ENCODE measurements at regions of chr11 and their contacts with region 1.

Region 1: DNA sequence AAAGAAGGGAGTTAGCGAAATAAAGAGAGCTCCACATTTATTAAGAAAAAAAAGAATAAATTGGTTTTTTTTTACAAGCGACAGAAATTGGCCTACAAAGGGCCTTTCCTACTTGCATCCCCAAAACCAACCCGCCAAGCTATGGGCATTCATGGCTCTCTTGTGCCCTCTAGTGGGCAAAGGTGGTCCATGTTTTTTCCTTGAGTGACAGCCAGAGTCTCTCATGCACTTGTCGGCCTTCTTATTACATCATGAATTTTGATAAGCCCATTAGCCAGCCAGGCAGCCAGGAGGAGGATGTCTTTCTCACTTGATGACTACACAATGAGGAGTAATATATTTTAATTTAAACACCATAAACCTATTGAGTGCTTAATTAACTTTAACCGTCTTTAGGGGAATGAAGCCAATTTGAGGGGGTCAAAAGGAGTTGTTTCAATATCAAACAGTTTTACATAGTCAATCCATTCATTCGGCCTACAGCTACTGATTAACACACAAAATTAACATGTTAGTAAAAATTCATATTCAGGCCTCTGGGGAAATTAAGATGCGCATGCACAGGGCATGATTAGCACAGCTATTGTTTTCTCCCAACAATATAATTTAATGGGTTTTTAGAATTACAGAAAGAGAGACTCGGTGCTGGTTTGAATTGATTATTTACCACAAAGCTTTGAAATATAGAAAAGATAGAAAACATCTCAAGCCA is 85.5 kb downstream of the RCN1 start:
- DNase-seq: peak; percentile 79

Region 2: DNA sequence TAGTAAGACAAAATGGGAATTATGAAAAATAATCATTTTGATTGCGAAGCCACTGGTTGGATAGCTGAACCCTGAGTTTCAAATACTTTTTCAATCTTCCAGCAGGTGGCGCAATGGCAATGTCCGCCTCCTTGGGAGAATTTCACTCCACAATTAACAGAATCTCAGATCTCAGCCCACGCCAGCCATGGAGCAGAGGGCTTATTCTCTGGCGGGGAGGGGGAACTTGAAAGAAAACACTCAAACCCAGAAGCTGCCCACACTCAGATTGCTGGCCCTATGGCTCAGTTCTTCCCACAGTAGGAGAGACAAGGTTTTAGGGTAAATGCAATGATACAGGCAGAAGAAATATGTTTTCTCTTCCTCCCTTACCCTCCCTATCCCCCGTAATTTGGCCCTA is 124.2 kb before region 1 on chr11:
- CTCF ChIA-PET with region 1: interaction called, 25 read pairs
- POLR2A ChIA-PET with region 1: no interaction called
- DNase-seq: peak; percentile 73

Region 3: DNA sequence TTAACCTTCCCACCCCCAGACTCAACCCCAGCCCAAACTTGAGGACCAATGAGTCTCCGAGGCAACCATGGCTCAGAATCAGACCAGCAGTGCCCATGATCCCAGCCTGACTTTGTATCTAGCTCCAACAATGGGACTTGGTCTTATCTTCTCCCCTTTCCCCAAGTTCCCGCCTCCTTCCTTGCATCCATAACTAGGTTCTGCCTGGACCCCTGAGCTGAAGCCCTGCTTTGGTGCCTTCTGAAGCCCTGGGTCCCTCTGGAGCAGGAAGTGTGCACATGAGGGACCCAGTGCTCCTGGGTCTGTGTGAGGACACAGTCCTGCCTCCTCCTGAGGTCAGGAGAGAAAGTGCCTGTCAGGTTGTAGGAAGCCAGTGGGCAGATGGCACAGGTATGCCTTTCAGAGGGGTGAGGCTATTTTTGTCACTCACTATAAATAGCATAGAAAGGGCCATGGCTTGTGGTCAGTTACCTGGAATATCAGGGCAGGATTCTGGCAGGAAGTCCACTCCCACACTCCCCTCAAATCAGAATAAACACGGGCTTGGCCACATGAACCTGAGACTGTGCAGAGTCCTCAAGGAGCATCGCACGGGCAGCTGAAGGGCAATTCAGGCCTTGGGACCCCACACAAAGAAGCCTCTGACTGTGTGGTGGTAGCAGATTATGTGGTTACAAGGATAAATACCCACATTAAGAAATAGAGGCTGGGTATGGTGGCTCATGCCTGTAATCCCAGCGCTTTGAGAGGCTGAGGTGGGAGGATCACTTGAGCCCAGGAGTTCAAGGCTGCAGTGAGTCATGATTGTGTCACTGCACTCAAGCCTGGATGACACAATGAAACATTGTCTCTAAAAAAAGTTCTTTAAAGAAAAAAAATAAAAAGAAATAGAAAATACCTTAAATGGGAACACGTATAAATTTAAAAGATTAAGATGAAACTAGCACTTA is 58.1 kb before region 1 on chr11:
- CTCF ChIA-PET with region 1: no interaction called
- POLR2A ChIA-PET with region 1: no interaction called
- DNase-seq: no peak

Region 4: GRCh38 chr11:32188785-32189184 is 12.4 kb after region 1 on chr11:
- CTCF ChIA-PET with region 1: no interaction called
- POLR2A ChIA-PET with region 1: no interaction called
- DNase-seq: no peak

Region 5: GRCh38 chr11:32297611-32298011 is 121.2 kb after region 1 on chr11:
- CTCF ChIA-PET with region 1: interaction called, 12 read pairs
- POLR2A ChIA-PET with region 1: no interaction called
- DNase-seq: peak; percentile 45